BJ (cell line): ENCODE measurements at regions of chr11 and their contacts with region 1.

Region 1: DNA sequence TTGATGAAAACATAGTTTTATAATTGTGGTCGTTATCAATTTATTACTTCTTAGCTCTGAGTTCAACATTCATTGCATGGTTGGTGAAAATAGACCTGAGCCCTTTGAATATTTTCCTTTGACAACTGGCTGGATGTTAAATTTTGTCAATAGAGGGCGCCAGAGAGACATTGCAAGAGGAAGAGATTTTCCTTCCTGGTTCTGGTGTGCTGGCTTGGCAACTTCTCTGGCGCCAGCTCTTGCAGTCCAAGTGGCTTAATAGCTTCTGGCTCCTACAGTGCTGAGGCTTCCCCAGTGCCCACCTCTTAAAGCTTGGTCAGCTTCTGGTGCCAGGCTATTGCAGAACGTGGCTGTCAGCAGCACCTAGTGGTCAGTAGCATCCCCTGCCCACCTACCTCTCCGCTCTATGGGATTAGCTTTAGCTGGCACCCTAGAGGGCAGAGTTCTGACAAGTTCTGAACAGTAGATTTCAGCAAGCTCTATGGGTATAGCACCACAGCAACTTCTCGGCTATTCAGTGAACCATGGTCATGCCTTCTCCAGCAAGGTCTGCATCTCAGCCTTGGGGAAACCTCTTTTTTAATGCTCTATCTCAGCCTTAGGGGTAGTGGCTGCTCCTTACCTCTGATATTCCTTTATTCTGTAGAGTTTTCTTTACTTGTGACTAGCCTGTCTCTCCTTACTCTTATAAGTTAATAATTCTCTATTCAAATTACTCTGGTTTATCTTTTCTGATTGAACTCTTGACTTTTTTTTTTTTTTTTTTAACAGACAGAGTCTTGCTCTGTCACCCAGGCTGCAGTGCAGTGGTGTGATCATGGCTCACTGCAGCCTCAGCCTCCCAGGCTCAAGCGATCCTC is 59.4 kb downstream of the ACER3 start:
- DNase-seq: no peak
- H3K4me3 ChIP-seq: no peak overlapping the region
- H3K27me3 ChIP-seq: no peaks in the 10 kb centered on the region
- CTCF ChIP-seq: peak; percentile 93

Region 2: GRCh38 chr11:76721755-76722677 is 198.1 kb before region 1 on chr11:
- CTCF ChIA-PET with region 1: interaction called, 36 read pairs
- POLR2A ChIA-PET with region 1: no interaction called
- DNase-seq: no peak
- H3K4me3 ChIP-seq: no peak overlapping the region
- H3K27me3 ChIP-seq: peaks cover 13% of the 10 kb centered on the region
- CTCF ChIP-seq: peak; percentile 97

Region 3: DNA sequence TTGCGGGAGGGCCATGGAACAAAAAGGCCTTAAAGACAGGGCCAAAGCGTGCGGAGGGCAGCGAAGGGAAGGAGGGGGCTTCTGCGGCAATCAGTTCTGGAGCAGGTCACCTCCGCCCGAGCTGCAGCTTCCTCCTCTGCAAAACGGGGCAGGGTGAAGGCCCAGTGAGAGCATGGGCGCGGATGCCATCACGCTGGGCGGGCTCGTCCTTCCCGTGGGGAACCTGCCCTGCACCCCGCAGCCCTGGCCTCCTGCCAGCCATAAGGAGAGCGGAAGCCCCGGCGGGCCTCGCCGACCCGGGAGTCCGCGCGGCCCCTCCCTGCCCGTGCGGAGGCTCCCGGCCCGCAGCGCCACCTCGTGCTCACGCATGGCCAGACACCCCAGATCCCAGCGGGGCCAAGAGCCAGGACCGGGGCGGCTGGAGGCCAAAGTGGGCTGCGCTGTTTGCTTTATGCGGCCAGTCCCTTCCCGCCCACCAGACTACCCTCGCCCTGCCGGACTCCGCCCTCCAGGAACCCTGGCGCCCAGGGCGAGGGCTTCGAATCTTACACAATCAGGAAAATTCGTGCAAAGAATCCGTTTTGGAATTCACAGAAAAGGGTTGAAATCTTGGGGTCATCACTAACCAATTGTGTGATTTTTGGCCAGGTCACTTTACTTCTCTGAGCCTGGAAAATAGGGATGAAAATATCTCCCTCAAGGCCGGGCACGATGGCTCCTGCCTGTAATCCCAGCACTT is 120.9 kb before region 1 on chr11:
- CTCF ChIA-PET with region 1: interaction called, 99 read pairs
- POLR2A ChIA-PET with region 1: no interaction called
- DNase-seq: no peak
- H3K4me3 ChIP-seq: no peak overlapping the region
- H3K27me3 ChIP-seq: no peaks in the 10 kb centered on the region
- CTCF ChIP-seq: peak; percentile 77

Region 4: GRCh38 chr11:76891278-76891677 is 28.8 kb before region 1 on chr11:
- CTCF ChIA-PET with region 1: interaction called, 28 read pairs
- POLR2A ChIA-PET with region 1: no interaction called
- DNase-seq: no peak
- H3K4me3 ChIP-seq: no peak overlapping the region
- H3K27me3 ChIP-seq: no peaks in the 10 kb centered on the region
- CTCF ChIP-seq: no peak

Region 5: GRCh38 chr11:77027270-77027669 is 107.2 kb after region 1 on chr11:
- CTCF ChIA-PET with region 1: interaction called, 20 read pairs
- POLR2A ChIA-PET with region 1: no interaction called
- DNase-seq: peak; percentile 46
- H3K4me3 ChIP-seq: no peak overlapping the region
- H3K27me3 ChIP-seq: peaks cover 2% of the 10 kb centered on the region; the same call in 1 of the 2 replicates
- CTCF ChIP-seq: no peak

Region 6: DNA sequence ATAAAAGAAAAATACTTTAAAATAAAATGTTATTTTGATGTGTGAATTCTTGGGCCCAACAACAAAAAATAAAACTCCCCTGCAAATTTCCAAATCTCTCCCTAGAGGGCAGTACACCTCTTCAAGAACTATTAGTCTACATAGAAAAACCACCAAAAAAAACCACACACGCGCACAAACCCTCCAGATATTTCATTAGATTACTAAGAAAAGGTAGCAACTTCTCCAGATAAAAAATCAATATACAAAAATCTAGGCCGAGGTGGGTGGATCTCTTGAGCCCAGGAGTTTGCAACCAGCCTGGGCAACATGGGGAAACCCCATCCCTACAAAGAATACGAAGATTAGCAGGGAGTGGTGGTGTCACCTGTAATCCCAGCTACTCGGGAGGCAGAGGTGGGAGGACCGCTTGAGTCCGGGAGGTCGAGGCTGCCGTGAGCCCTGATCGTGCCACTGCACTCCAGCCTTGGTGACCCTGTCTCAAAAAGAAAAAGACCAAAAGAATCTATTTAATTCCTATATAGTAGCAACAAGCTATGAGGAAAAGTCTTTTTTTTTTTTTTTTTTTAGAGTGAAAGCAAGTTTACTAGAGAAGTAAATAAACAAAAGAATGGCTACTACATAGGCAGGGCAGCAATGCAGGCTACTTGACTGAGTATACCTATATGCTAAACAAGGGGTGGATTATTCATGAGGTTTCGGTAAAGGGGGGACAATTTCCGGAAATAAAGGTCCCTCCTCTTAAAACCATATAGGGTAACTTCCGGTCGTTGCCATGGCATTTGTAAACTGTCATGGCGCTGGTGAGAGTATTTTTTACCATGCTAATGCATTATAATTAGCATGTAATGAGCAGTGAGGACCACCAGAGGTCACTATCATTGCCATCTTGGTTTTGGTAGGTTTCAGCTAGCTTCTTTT is 127.2 kb after region 1 on chr11:
- CTCF ChIA-PET with region 1: interaction called, 10 read pairs
- POLR2A ChIA-PET with region 1: no interaction called
- DNase-seq: peak; percentile 92
- H3K4me3 ChIP-seq: peak overlapping the region; percentile 44
- H3K27me3 ChIP-seq: peaks cover 2% of the 10 kb centered on the region; the same call in 1 of the 2 replicates
- CTCF ChIP-seq: peak; percentile 65

Region 7: DNA sequence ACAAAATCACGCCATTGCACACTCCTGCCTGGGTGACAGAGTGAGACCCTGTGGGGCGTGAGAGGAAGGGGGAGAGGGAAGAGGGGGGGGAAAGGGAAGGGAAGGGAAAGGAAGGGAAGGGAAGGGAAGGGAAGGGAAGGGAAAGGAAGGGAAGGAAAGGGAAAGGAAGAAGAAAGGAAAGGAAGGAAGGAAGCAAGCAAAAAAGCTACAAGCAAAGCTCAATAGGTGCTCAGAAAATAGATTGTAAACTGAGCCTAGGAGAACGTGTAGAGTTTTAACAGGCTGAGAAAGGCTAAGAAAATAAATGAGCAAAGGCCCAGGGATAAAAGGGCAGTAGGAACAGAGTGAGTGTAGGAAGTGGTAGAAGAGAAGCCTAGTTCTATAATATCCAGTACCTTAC is 412.1 kb after region 1 on chr11:
- CTCF ChIA-PET with region 1: no interaction called
- POLR2A ChIA-PET with region 1: no interaction called
- DNase-seq: no peak
- H3K4me3 ChIP-seq: no peak overlapping the region
- H3K27me3 ChIP-seq: no peaks in the 10 kb centered on the region
- CTCF ChIP-seq: no peak